SK-N-SH (cell line): ENCODE measurements at regions of chr12 and their contacts with region 1.

Region 1: GRCh38 chr12:116609319-116610114 is 50.3 kb downstream of the MAP1LC3B2 start:
- DNase-seq: no peak
- H3K4me3 ChIP-seq: no peak overlapping the region
- H3K27ac ChIP-seq: no peak overlapping the region
- H3K4me1 ChIP-seq: no peaks in the 10 kb centered on the region; a peak in 1 of 4 replicates
- H3K27me3 ChIP-seq: no peaks in the 10 kb centered on the region
- CTCF ChIP-seq: peak; percentile 52
- EP300 ChIP-seq: no peak
- RAD21 ChIP-seq: peak; percentile 60

Region 2: GRCh38 chr12:116599285-116600136 is 10.0 kb before region 1 on chr12:
- CTCF ChIA-PET with region 1: interaction called, 11 read pairs
- POLR2A ChIA-PET with region 1: no interaction called
- DNase-seq: peak; percentile 81
- H3K4me3 ChIP-seq: no peak overlapping the region
- H3K27ac ChIP-seq: no peak overlapping the region
- H3K4me1 ChIP-seq: peaks cover 8 to 9% of the 10 kb centered on the region in 2 experiments; a peak in 2 of 4 replicates
- H3K27me3 ChIP-seq: no peaks in the 10 kb centered on the region
- CTCF ChIP-seq: peak; percentile 59
- EP300 ChIP-seq: no peak
- RAD21 ChIP-seq: peak; percentile 62